CD4-positive, alpha-beta T cell (primary cell): ENCODE measurements at regions of chr5 and their contacts with region 1.

Region 1: DNA sequence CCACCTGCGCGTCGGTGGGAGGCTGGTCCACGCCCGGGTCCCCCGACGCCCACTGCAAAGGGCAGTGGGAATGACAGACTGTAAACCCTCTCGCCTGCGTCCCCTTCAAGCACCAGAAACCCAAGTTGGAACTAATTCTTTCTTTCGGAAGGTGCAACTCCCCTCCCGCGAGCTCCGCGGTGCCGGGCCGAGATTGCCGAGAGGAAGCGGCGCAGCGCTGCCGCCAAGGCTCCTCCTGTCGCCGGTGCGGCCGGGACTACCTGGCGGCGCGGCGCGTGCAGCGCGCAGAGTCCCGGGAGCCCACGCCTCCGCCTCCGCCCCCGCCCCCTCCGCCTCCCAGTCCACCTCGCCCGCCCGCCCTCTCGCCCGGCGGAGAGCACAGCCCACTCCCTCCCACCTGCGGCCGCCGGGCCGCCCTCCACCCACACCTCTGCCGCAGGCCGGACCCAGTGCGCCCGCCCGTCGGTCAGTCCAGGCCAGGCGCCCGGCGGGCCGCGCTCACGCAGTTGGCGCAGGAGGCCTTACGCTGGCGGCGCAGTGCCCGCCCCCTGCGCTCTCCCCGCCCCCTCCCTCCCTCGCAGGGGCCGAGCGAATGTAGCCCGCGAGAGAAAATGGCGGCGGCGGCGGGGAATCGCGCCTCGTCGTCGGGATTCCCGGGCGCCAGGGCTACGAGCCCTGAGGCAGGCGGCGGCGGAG is at the start of gene MAP3K1:
- DNase-seq: peak; percentile 69 to 94 (median 80)
- ATAC-seq: peak; percentile 71
- H3K4me3 ChIP-seq: peak within 1 kb of the TSS; percentile 66
- H3K4me3 Mint-ChIP-seq: peak within 1 kb of the TSS; percentile 99
- H3K27ac ChIP-seq: peak within 1 kb of the TSS; percentile 78 to 82
- H3K27ac Mint-ChIP-seq: peak within 1 kb of the TSS; percentile 97
- H3K4me1 ChIP-seq: peaks cover 10% of the 10 kb centered on the region
- H3K4me1 Mint-ChIP-seq: peaks cover 43% of the 10 kb centered on the region
- H3K27me3 ChIP-seq: no peaks in the 10 kb centered on the region
- H3K27me3 Mint-ChIP-seq: no peaks in the 10 kb centered on the region
- CTCF ChIP-seq: no peak
- total RNA-seq, gene MAP3K1: 59.4 to 62.5 TPM

Region 2: DNA sequence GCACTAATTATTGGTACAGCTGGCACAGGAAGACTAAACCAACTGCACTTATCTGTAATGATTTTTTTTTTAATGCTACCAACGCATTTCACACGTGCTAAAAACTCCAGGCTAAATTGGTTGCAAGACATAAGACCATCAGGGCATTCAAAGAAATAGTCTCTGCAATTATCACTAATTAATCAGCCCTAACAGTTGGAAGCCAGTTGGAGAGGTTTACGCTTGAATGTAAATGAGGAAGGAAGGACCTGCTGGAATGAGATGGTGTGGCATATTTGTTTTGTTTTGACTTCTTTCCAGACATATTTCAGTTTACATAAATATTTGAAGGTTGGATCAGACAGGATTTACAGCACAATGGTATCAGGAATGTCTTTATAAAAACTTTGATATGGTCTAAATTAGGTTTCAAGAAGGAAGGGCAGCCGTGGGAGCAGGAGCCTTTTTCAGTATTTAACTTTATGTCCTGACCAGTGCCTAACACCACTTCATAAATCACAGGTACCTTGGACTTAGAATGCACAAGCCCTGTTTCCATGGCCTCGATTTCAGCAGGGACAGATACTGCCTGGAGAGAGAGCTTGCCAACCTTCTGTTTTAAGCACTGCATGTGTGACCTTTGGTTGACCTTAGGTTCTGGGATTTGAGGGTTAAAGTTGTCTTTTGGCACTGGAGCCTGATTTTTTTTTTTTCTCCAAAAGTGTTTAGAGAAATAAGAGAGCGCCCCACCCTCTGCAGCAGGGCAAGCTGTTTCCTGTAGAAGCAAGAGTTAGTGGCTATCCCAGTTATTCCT is 199.6 kb before region 1 on chr5:
- CTCF ChIA-PET with region 1: no interaction called
- POLR2A ChIA-PET with region 1: interaction called, 14 read pairs
- intact Hi-C with region 1: no loop called
- DNase-seq: peak in 1 of 14 experiments; percentile 15
- ATAC-seq: peak; percentile 25
- H3K4me3 ChIP-seq: no peak overlapping the region
- H3K4me3 Mint-ChIP-seq: peak overlapping the region; percentile 52
- H3K27ac ChIP-seq: peak overlapping the region in 1 of 2 donors; percentile 0
- H3K27ac Mint-ChIP-seq: peak overlapping the region; percentile 82
- H3K4me1 ChIP-seq: peaks cover 43% of the 10 kb centered on the region
- H3K4me1 Mint-ChIP-seq: peaks cover 65% of the 10 kb centered on the region
- H3K27me3 ChIP-seq: no peaks in the 10 kb centered on the region
- H3K27me3 Mint-ChIP-seq: no peaks in the 10 kb centered on the region
- CTCF ChIP-seq: no peak

Region 3: DNA sequence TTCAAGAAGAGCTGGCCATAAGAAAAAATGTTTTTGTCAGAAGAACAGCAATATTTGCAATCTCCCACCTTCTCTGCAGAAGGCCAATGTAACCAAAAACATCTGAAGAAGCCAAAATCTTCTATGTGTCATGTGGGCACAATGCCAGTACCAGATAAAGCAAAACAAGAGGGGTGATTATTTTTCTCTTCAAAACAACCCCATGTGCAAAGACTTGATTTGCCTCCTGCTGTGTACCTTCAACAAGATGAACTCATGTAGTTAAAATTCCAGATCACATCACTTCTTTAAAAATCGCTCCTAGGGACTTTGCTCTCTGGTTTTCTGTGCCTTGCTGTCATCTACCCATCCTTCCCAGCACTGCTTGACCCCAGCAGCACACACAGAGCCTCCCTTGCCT is 133.8 kb before region 1 on chr5:
- CTCF ChIA-PET with region 1: no interaction called
- POLR2A ChIA-PET with region 1: interaction called, 45 read pairs
- intact Hi-C with region 1: loop called in 1 of 2 experiments (anchors 5 kb)
- DNase-seq: peak in 2 of 14 experiments; percentile 40 to 51
- ATAC-seq: peak; percentile 44
- H3K4me3 ChIP-seq: no peak overlapping the region
- H3K4me3 Mint-ChIP-seq: peak overlapping the region; percentile 16
- H3K27ac ChIP-seq: peak overlapping the region in 1 of 2 donors; percentile 14
- H3K27ac Mint-ChIP-seq: peak overlapping the region; percentile 74
- H3K4me1 ChIP-seq: peaks cover 31% of the 10 kb centered on the region
- H3K4me1 Mint-ChIP-seq: peaks cover 78% of the 10 kb centered on the region
- H3K27me3 ChIP-seq: no peaks in the 10 kb centered on the region
- H3K27me3 Mint-ChIP-seq: no peaks in the 10 kb centered on the region
- CTCF ChIP-seq: no peak

Region 4: DNA sequence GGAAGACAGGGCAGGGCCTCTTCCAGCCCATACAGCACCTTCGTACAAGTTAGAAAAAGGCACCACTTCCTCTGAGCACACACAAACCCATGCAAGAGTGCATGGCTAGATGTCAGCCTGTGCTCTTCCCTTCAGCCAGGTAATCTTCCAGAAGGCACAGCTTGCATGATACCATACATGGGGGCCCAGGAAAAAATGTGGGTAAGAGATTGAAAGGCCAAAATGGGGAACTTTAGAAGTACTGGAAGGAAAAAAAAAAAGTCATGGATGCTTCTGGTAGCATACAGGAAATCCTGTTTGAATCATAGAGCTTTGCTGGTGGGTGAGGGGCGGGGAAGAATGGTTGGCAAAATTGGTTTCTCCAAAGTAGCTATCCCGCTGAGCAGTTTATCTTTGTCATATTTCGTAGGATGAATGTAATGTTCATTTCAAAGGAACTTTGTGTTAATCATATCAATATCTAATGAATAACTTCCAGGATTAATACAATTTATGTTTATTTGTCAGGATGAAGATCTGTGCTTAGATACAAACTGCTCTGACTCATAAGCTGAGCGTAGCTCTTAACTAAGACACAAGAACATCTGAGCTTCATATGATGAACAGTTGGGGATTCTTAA is 78.0 kb before region 1 on chr5:
- CTCF ChIA-PET with region 1: no interaction called
- POLR2A ChIA-PET with region 1: interaction called, 20 read pairs
- intact Hi-C with region 1: loop called in 1 of 2 experiments (anchors 5 kb)
- DNase-seq: peak in 5 of 14 experiments; percentile 3 to 41 (median 35)
- ATAC-seq: peak; percentile 45
- H3K4me3 ChIP-seq: no peak overlapping the region
- H3K4me3 Mint-ChIP-seq: peak overlapping the region; percentile 78
- H3K27ac ChIP-seq: peak overlapping the region; percentile 55 to 76
- H3K27ac Mint-ChIP-seq: peak overlapping the region; percentile 86
- H3K4me1 ChIP-seq: peaks cover 48% of the 10 kb centered on the region
- H3K4me1 Mint-ChIP-seq: peaks cover 59% of the 10 kb centered on the region
- H3K27me3 ChIP-seq: no peaks in the 10 kb centered on the region
- H3K27me3 Mint-ChIP-seq: no peaks in the 10 kb centered on the region
- CTCF ChIP-seq: no peak

Region 5: DNA sequence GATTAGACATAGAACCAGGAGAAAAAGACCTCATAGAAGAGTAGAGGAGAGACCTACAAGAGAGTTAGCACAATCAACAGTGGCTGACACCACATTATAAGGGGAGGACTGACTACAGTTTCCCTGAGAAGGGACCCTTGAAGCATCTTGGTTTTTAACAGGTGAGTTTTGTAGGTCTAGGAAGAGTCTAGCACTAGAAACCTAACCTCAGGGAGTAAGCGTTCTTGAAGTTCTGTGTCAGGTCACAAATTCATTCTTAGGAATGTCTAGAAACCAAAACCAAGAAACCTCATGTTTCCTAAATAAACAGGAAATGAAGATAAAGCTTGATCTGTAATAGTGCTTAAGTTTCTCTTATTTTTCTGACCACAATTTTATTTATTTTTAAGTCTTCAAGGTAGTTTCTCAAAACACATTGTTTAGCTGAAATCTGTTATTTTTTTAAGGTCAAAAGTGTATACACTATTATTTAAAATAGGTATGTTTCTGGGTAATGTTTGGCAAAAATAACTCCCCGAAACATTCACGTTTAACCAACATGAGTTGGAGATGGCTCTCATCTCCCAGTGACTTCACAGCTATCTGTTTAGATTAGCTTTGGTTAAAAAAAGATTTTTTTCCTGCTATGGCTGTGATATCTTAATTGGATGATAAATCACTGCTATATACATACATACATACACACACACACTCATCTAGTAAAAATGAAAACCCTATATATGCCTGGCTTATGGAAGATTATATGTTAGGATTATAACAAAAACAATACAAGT is 37.3 kb after region 1 on chr5:
- CTCF ChIA-PET with region 1: no interaction called
- POLR2A ChIA-PET with region 1: no interaction called
- intact Hi-C with region 1: loop called in 1 of 2 experiments (anchors 5 kb)
- DNase-seq: peak in 2 of 14 experiments; percentile 33 to 56
- ATAC-seq: peak; percentile 51
- H3K4me3 ChIP-seq: peak overlapping the region; percentile 2
- H3K4me3 Mint-ChIP-seq: peak overlapping the region; percentile 50
- H3K27ac ChIP-seq: peak overlapping the region in 1 of 2 donors; percentile 30
- H3K27ac Mint-ChIP-seq: peak overlapping the region; percentile 43
- H3K4me1 ChIP-seq: peaks cover 46% of the 10 kb centered on the region
- H3K4me1 Mint-ChIP-seq: peaks cover 94% of the 10 kb centered on the region
- H3K27me3 ChIP-seq: no peaks in the 10 kb centered on the region
- H3K27me3 Mint-ChIP-seq: no peaks in the 10 kb centered on the region
- CTCF ChIP-seq: no peak

Region 6: GRCh38 chr5:56876327-56876726 is 61.2 kb after region 1 on chr5:
- CTCF ChIA-PET with region 1: no interaction called
- POLR2A ChIA-PET with region 1: no interaction called
- intact Hi-C with region 1: no loop called
- DNase-seq: no peak
- ATAC-seq: no peak
- H3K4me3 ChIP-seq: no peak overlapping the region
- H3K4me3 Mint-ChIP-seq: no peak overlapping the region
- H3K27ac ChIP-seq: no peak overlapping the region
- H3K27ac Mint-ChIP-seq: peak overlapping the region; percentile 65
- H3K4me1 ChIP-seq: peaks cover 2% of the 10 kb centered on the region
- H3K4me1 Mint-ChIP-seq: peaks cover 44% of the 10 kb centered on the region
- H3K27me3 ChIP-seq: no peaks in the 10 kb centered on the region
- H3K27me3 Mint-ChIP-seq: no peaks in the 10 kb centered on the region
- CTCF ChIP-seq: no peak

Region 7: DNA sequence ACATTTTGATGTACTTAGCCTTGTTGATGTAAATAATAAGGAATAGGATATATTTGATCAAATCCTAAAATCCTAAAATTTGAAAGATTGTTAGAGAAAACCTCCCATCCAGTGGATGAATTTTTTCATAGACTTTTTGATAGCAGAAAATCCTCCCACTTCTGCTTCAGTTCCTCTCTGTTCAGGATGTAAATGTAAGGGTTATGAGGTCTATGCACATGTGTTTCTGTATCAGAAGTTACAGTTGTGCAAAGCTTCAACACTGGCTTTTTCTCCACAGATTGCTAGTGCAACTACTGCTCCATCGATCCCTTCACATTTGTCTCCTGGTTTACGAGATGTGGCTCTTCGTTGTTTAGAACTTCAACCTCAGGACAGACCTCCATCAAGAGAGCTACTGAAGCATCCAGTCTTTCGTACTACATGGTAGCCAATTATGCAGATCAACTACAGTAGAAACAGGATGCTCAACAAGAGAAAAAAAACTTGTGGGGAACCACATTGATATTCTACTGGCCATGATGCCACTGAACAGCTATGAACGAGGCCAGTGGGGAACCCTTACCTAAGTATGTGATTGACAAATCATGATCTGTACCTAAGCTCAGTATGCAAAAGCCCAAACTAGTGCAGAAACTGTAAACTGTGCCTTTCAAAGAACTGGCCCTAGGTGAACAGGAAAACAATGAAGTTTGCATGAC is 78.3 kb after region 1 on chr5:
- CTCF ChIA-PET with region 1: no interaction called
- POLR2A ChIA-PET with region 1: no interaction called
- intact Hi-C with region 1: no loop called
- DNase-seq: no peak
- ATAC-seq: no peak
- H3K4me3 ChIP-seq: no peak overlapping the region
- H3K4me3 Mint-ChIP-seq: no peak overlapping the region
- H3K27ac ChIP-seq: no peak overlapping the region
- H3K27ac Mint-ChIP-seq: peak overlapping the region; percentile 6
- H3K4me1 ChIP-seq: no peaks in the 10 kb centered on the region
- H3K4me1 Mint-ChIP-seq: peaks cover 5% of the 10 kb centered on the region
- H3K27me3 ChIP-seq: no peaks in the 10 kb centered on the region
- H3K27me3 Mint-ChIP-seq: no peaks in the 10 kb centered on the region
- CTCF ChIP-seq: no peak